ENCODE measurements at regions of chr15 and their contacts with region 1.

Region 1: GRCh38 chr15:98850961-98851573 is 156.5 kb downstream of the PGPEP1L start:
- DNase-seq: peak; percentile 33 to 80 (median 68)
- ATAC-seq: peak; percentile 62 to 69 (median 67)
- H3K4me3 ChIP-seq: no peak overlapping the region
- H3K4me3 Mint-ChIP-seq: peak overlapping the region; percentile 82 to 92 (median 88)
- H3K27ac ChIP-seq: peak overlapping the region; percentile 68
- H3K27ac Mint-ChIP-seq: peak overlapping the region; percentile 91 to 96
- H3K4me1 ChIP-seq: peaks cover 17 to 32% of the 10 kb centered on the region in 2 experiments
- H3K4me1 Mint-ChIP-seq: peaks cover 55 to 58% (median 57%) of the 10 kb centered on the region in 3 donors
- H3K27me3 ChIP-seq: no peaks in the 10 kb centered on the region
- H3K27me3 Mint-ChIP-seq: no peaks in the 10 kb centered on the region

Region 2: DNA sequence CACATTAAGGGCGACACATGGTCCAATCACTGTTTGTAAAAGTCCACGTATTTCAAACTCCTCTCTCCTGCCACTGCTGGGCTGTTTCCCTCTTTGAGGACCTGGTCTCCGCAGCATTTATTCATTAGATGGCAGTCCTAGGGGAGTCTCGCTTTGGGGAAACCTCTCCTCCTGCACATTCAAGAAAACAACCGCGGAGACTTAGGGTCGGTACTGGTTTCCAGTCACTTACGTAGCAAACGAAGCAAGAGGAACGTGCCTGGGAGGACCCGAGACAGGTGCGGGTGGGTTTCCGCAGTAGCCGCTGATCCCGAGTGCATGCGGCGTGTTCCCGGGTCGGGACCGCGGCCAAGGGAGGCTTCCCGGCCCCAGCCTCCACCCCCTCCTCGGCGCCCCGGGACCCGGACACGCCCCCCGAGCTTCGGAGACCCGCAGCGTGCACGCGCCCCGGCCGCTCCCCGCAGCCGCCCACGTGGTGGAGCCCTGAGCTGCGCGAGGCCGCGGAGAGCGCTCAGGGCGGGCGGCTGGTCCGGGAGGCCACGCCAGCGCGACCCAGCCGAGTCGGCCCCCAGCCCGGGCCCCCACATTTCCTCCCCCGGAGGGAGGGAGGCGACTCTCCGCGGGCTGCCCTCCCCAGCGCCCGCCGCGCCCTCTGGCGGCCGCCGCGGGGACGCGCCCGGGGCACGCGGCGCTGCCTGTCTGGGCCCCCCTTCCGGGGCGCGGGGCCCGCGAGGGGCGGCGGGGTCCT is 203.9 kb before region 1 on chr15:
- CTCF ChIA-PET with region 1: interaction called in 1 of 2 experiments, 12 read pairs
- POLR2A ChIA-PET with region 1: interaction called, 3 read pairs
- DNase-seq: peak; percentile 16 to 78 (median 52)
- ATAC-seq: peak; percentile 47 to 54 (median 52)
- H3K4me3 ChIP-seq: peak overlapping the region; percentile 77 to 82
- H3K4me3 Mint-ChIP-seq: peak overlapping the region; percentile 80 to 96 (median 86)
- H3K27ac ChIP-seq: no peak overlapping the region
- H3K27ac Mint-ChIP-seq: peak overlapping the region; percentile 52 to 67
- H3K4me1 ChIP-seq: peaks cover 5 to 32% of the 10 kb centered on the region in 2 experiments
- H3K4me1 Mint-ChIP-seq: peaks cover 15 to 27% (median 18%) of the 10 kb centered on the region in 3 donors
- H3K27me3 ChIP-seq: peaks cover 0 to 29% of the 10 kb centered on the region in 2 experiments
- H3K27me3 Mint-ChIP-seq: peaks cover 0 to 21% of the 10 kb centered on the region in 2 donors

Region 3: GRCh38 chr15:98779463-98780071 is 71.5 kb before region 1 on chr15:
- CTCF ChIA-PET with region 1: interaction called, 4 to 17 read pairs
- POLR2A ChIA-PET with region 1: no interaction called
- DNase-seq: peak; percentile 12 to 83 (median 61)
- ATAC-seq: peak; percentile 69 to 81 (median 74)
- H3K4me3 ChIP-seq: no peak overlapping the region
- H3K4me3 Mint-ChIP-seq: peak overlapping the region; percentile 31 to 50 (median 45)
- H3K27ac ChIP-seq: no peak overlapping the region
- H3K27ac Mint-ChIP-seq: no peak overlapping the region
- H3K4me1 ChIP-seq: peaks cover 10 to 27% of the 10 kb centered on the region in 2 experiments
- H3K4me1 Mint-ChIP-seq: peaks cover 43 to 50% (median 43%) of the 10 kb centered on the region in 3 donors
- H3K27me3 ChIP-seq: no peaks in the 10 kb centered on the region
- H3K27me3 Mint-ChIP-seq: no peaks in the 10 kb centered on the region

Region 4: DNA sequence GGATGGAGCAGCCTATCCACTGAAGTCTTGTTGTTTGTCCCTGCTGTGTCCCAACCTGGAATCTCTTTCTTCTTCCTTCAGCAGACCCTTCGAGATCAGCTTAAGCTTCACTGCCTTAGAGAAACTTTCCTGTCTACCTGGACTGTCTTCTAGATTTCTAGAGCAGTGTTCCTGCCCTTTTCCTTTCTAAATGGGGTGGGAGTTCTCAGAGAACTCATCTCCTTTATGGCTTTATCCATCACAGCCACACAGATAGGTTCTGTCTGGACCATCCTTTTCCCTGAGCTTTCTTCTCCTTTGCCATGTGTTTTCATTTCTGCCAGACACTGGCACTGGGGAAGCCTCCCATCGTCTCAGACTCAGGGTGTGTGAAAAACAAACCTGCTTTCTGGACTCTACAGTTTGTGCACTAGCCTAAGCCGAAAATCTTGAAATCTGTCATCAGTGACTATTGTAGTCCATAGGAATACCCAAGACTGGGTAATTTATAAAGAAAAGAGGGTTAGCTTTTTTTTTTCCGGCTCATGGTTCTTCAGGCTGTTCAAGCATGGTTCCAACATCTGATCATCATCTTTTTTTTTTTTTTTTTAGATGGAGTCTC is 20.9 kb before region 1 on chr15:
- CTCF ChIA-PET with region 1: no interaction called
- POLR2A ChIA-PET with region 1: no interaction called
- DNase-seq: no peak
- ATAC-seq: no peak
- H3K4me3 ChIP-seq: no peak overlapping the region
- H3K4me3 Mint-ChIP-seq: no peak overlapping the region
- H3K27ac ChIP-seq: no peak overlapping the region
- H3K27ac Mint-ChIP-seq: no peak overlapping the region
- H3K4me1 ChIP-seq: no peaks in the 10 kb centered on the region
- H3K4me1 Mint-ChIP-seq: peaks cover 0 to 6% (median 5%) of the 10 kb centered on the region in 3 donors
- H3K27me3 ChIP-seq: no peaks in the 10 kb centered on the region
- H3K27me3 Mint-ChIP-seq: no peaks in the 10 kb centered on the region

Region 5: DNA sequence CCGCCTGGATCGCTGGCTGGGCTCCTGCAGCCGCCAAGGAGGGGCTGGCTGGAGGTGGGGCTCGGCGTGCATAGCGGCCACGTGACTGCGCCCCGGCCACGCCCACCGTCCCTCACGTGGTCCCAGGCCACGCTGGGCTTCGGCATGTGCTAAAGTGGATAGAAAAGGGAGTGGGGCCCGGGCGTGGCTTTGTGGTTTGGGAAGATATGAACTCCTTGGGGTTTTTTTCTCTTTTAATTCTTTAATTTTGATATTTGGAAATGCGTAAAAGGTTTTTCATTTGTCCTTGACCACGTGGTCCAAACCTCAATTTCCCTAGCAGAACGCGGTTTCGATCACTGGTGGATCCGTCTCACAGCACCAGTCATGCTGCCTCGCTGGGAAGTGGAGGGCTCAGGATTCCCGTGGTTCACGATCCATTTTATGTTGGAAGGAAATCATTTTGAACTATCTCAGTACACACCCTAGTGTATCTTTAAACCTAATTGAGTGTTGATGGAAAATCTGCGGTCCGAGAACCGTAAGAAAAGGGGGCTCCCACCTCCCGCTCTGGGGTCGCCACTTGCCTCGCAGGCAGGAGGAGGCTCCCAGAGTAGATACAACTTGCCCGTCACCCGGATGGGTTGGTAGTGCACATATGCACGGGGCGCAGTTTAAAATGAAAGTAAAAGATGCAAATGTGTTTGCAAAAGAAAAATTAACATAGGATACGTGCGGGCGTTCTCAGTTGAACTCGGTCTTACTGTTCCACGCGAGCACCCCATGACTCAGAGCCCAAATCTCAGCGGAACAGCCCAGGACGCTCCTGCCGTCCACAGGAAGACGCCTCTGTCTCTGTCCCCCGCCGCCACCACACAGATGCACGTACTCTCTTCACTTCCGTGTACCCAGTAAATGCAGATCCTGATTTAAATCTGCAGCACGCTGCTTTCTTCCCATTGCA is 14.6 kb after region 1 on chr15:
- CTCF ChIA-PET with region 1: interaction called in 1 of 2 experiments, 10 read pairs
- POLR2A ChIA-PET with region 1: no interaction called
- DNase-seq: peak; percentile 30 to 86 (median 65)
- ATAC-seq: peak; percentile 83 to 95 (median 92)
- H3K4me3 ChIP-seq: peak overlapping the region; percentile 54 to 68
- H3K4me3 Mint-ChIP-seq: peak overlapping the region; percentile 83 to 86 (median 86)
- H3K27ac ChIP-seq: peak overlapping the region; percentile 71
- H3K27ac Mint-ChIP-seq: peak overlapping the region; percentile 91 to 95
- H3K4me1 ChIP-seq: peaks cover 13 to 14% of the 10 kb centered on the region in 2 experiments
- H3K4me1 Mint-ChIP-seq: peaks cover 44 to 60% (median 57%) of the 10 kb centered on the region in 3 donors
- H3K27me3 ChIP-seq: no peaks in the 10 kb centered on the region
- H3K27me3 Mint-ChIP-seq: no peaks in the 10 kb centered on the region